CD8-positive, alpha-beta T cell (primary cell): ENCODE measurements at regions of chr1 and their contacts with region 1.

Region 1: GRCh38 chr1:151047925-151048645 is 534 bp downstream of the C1orf56 start:
- DNase-seq: peak in 8 of 9 experiments; percentile 43 to 86 (median 67)
- ATAC-seq: peak; percentile 81
- H3K4me3 ChIP-seq: peak overlapping the region; percentile 89 to 98
- H3K4me3 Mint-ChIP-seq: peak overlapping the region; percentile 91
- H3K27ac ChIP-seq: peak overlapping the region; percentile 53 to 88
- H3K27ac Mint-ChIP-seq: peak overlapping the region; percentile 91
- H3K4me1 ChIP-seq: peaks cover 39% of the 10 kb centered on the region
- H3K4me1 Mint-ChIP-seq: peaks cover 64% of the 10 kb centered on the region
- H3K27me3 ChIP-seq: no peaks in the 10 kb centered on the region
- H3K27me3 Mint-ChIP-seq: no peaks in the 10 kb centered on the region
- CTCF ChIP-seq: peak; percentile 51

Region 2: DNA sequence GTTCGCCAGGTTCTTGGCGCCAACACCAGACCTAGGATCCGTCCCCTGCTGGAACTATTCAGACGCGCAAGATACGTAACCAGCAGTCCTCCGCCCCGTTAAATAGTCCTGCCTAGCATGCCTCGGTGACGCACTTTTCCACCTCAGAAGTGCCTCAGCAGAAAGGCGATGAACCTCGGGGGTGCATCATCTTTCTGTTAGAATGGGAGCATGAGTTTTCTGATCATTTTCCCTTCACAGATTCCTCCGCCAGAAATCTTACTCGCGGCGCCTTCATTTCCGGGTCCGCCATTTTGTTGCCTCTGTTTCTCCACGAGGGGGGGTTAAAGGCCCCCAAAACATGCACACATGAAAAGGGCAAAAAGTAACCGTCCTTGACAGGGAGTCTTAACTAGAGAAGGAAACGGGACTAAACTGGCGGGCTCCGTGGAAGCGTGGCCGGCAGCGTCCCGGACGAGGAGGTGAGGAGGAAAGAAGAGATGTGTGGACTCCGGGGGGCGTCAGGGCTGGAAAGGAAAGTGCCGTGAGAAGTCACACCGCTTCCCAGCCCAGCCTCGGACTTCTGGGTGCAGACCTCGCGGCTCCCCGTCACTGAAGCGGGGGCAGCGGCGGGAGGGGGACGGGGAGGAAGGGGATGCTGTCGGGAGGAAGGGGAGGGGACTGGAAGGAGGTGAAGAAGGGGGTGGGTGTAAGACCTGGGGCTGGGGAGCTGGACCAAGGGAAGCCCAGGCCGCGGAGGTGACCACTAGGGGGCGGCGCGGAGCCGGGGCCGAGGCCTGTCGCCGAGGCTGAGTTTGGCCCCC is 22.6 kb after region 1 on chr1 and contains the start of gene GABPB2:
- CTCF ChIA-PET with region 1: interaction called, 5 read pairs
- POLR2A ChIA-PET with region 1: interaction called, 10 read pairs
- intact Hi-C with region 1: no loop called
- DNase-seq: peak; percentile 69 to 96 (median 86)
- ATAC-seq: peak; percentile 81
- H3K4me3 ChIP-seq: peak within 1 kb of the TSS; percentile 78 to 97
- H3K4me3 Mint-ChIP-seq: peak within 1 kb of the TSS; percentile 99
- H3K27ac ChIP-seq: peak within 1 kb of the TSS; percentile 89 to 90
- H3K27ac Mint-ChIP-seq: peak within 1 kb of the TSS; percentile 100
- H3K4me1 ChIP-seq: peaks cover 11% of the 10 kb centered on the region
- H3K4me1 Mint-ChIP-seq: peaks cover 29% of the 10 kb centered on the region
- H3K27me3 ChIP-seq: no peaks in the 10 kb centered on the region
- H3K27me3 Mint-ChIP-seq: no peaks in the 10 kb centered on the region
- CTCF ChIP-seq: peak; percentile 91
- total RNA-seq, gene GABPB2: 20.0 to 21.9 TPM